Prostate gland (tissue), 2 donors: ENCODE measurements at regions of chr6 and their contacts with region 1.

Region 1: GRCh38 chr6:132830334-132830751 is 16.0 kb downstream of the RPS12 start:
- DNase-seq: no peak
- H3K4me3 ChIP-seq: no peak overlapping the region
- H3K27ac ChIP-seq: no peak overlapping the region
- H3K4me1 ChIP-seq: no peaks in the 10 kb centered on the region
- H3K27me3 ChIP-seq: no peaks in the 10 kb centered on the region
- CTCF ChIP-seq: peak in 3 of 4 experiments; percentile 36 to 55 (median 53)
- POLR2A ChIP-seq: no peak

Region 2: GRCh38 chr6:132790450-132790849 is 39.9 kb before region 1 on chr6:
- intact Hi-C with region 1: no loop called
- DNase-seq: no peak
- H3K4me3 ChIP-seq: no peak overlapping the region
- H3K27ac ChIP-seq: no peak overlapping the region
- H3K4me1 ChIP-seq: no peaks in the 10 kb centered on the region
- H3K27me3 ChIP-seq: no peaks in the 10 kb centered on the region
- CTCF ChIP-seq: no peak
- POLR2A ChIP-seq: no peak

Region 3: DNA sequence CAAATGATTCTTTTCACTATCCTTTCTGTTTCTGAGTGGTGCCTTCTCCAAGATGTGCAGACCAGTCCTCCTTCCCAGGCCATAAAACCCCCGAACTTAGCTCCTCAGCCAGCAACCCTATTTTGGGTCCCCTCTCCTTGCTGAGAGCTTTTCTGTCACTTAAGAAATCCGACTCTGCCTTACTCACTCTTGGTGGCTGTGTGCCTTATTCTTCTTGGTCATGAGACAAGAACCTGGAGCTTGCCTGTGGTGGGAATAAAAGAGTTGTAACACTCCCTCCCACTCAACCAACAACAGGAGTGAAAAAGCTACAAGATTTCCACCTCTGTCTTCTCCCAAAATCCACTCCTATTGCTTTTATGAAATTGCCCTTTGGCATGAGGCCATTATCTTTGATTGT is 46.7 kb after region 1 on chr6:
- intact Hi-C with region 1: no loop called
- DNase-seq: no peak
- H3K4me3 ChIP-seq: no peak overlapping the region
- H3K27ac ChIP-seq: no peak overlapping the region
- H3K4me1 ChIP-seq: no peaks in the 10 kb centered on the region
- H3K27me3 ChIP-seq: no peaks in the 10 kb centered on the region
- CTCF ChIP-seq: no peak
- POLR2A ChIP-seq: no peak

Region 4: GRCh38 chr6:133553652-133554051 is 723.3 kb after region 1 on chr6:
- intact Hi-C with region 1: loop called (anchors 5 kb)
- DNase-seq: peak; percentile 19
- H3K4me3 ChIP-seq: no peak overlapping the region
- H3K27ac ChIP-seq: no peak overlapping the region
- H3K4me1 ChIP-seq: no peaks in the 10 kb centered on the region
- H3K27me3 ChIP-seq: no peaks in the 10 kb centered on the region
- CTCF ChIP-seq: peak in 3 of 4 experiments; percentile 55 to 59 (median 55)
- POLR2A ChIP-seq: no peak